PC-9 (cell line): ENCODE measurements at regions of chr20 and their contacts with region 1.

Region 1: GRCh38 chr20:32155017-32155981 is 45.8 kb downstream of the TM9SF4 start:
- DNase-seq: peak in 1 of 2 experiments; percentile 68
- H3K4me3 ChIP-seq: no peak overlapping the region
- H3K27ac ChIP-seq: peak overlapping the region; percentile 29; the same call in 1 of the 2 replicates
- H3K4me1 ChIP-seq: no peaks in the 10 kb centered on the region
- H3K27me3 ChIP-seq: no peaks in the 10 kb centered on the region
- CTCF ChIP-seq: no peak

Region 2: GRCh38 chr20:32132911-32133549 is 22.3 kb before region 1 on chr20:
- CTCF ChIA-PET with region 1: no interaction called
- POLR2A ChIA-PET with region 1: no interaction called
- intact Hi-C with region 1: no loop called
- DNase-seq: no peak
- H3K4me3 ChIP-seq: no peak overlapping the region
- H3K27ac ChIP-seq: no peak overlapping the region
- H3K4me1 ChIP-seq: no peaks in the 10 kb centered on the region
- H3K27me3 ChIP-seq: no peaks in the 10 kb centered on the region
- CTCF ChIP-seq: no peak

Region 3: DNA sequence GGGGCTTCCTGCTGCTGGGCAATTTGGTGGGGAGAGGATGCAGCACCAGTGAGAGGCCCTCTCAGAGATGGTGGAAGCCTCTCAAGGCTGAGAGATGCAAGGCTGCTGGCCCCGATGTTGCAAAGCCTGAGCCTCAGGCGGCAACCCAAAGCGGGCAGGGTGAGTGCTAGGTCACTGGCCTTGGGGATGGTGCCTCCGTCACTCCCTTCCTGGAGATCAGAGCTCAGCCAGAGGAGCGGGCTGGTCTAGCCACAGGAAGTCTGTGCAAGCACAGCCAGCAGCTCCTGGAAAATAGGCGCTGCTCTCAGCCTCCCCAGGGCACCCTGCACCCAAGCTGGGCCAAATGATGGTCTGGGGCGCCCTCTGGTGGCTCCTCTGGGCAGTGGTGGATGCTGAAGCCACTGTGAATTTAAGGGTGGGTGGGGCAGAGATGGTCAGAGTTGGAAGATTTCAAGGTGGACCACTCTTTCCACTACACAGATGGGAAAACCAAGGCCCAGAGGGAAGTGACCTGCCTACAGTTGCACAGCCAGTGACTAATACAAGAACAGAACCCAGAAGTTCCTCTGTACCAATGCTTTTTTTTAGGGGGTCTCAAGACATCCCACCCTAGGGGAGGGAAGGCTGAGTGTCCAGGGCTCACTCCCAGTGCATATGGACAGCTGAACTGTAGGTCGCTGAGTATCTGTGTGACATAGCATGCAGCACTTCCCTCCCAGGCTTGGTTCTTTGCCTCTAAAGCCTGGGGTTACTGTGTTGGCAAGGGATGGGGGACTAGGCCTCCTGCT is 497.6 kb after region 1 on chr20:
- CTCF ChIA-PET with region 1: no interaction called
- POLR2A ChIA-PET with region 1: no interaction called
- intact Hi-C with region 1: loop called (anchors 2 kb)
- DNase-seq: peak; percentile 89 to 92
- H3K4me3 ChIP-seq: no peak overlapping the region
- H3K27ac ChIP-seq: no peak overlapping the region
- H3K4me1 ChIP-seq: peaks cover 22% of the 10 kb centered on the region
- H3K27me3 ChIP-seq: no peaks in the 10 kb centered on the region
- CTCF ChIP-seq: peak; percentile 94